Activated CD4-positive, alpha-beta T cell treated with anti-CD3 and anti-CD28 coated beads, Interleukin-2, amount 10 ng/mL, durations not matched to agents 24 days and 14 days (primary cell): ENCODE measurements at regions of chr4 and their contacts with region 1.

Region 1: GRCh38 chr4:55948726-55949474 is at the start of gene CEP135:
- DNase-seq: peak; percentile 98
- H3K4me3 Mint-ChIP-seq: peak within 1 kb of the TSS; percentile 87
- H3K27ac Mint-ChIP-seq: peak within 1 kb of the TSS; percentile 89
- H3K4me1 Mint-ChIP-seq: peaks cover 33% of the 10 kb centered on the region
- H3K27me3 Mint-ChIP-seq: no peaks in the 10 kb centered on the region
- total RNA-seq, gene CEP135: 16.3 and 16.9 TPM in 2 replicates

Region 2: DNA sequence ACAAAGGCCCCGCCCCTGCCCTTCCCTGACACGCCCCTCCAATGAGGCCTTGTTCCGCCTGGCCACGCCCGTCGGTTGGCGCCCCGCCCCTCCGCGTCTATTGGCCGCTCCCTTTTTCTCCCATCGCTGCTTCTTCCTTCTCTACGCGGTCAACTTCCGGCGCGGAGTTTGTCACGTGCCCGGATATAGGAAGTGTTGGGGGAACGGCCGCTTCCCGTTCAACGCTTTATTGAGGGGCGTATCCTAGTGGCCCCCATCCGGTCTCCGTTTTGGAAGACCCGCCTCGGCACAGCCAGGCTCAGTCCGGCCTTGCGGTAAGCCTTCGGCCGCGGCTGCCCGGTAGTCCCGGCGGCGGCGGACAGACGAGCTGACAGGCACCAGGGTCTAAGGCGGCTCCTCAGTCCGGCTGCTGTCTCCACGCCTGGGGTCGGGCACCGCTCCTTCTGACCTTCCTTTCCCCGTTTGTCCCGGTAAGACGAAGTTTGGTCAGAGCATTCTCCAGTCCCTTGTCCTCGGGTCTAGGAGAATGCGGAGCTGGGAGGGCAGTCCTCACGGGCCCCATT is 95.3 kb before region 1 on chr4 and contains the start of gene EXOC1:
- intact Hi-C with region 1: loop called (anchors 1 kb)
- DNase-seq: peak; percentile 99
- H3K4me3 Mint-ChIP-seq: peak within 1 kb of the TSS; percentile 38
- H3K27ac Mint-ChIP-seq: peak within 1 kb of the TSS; percentile 90
- H3K4me1 Mint-ChIP-seq: peaks cover 20% of the 10 kb centered on the region
- H3K27me3 Mint-ChIP-seq: no peaks in the 10 kb centered on the region
- total RNA-seq, gene EXOC1: 20.8 and 21.5 TPM in 2 replicates

Region 3: GRCh38 chr4:55887594-55887993 is 61.3 kb before region 1 on chr4:
- intact Hi-C with region 1: no loop called
- DNase-seq: no peak
- H3K4me3 Mint-ChIP-seq: no peak overlapping the region
- H3K27ac Mint-ChIP-seq: no peak overlapping the region
- H3K4me1 Mint-ChIP-seq: peaks cover 5% of the 10 kb centered on the region
- H3K27me3 Mint-ChIP-seq: no peaks in the 10 kb centered on the region

Region 4: DNA sequence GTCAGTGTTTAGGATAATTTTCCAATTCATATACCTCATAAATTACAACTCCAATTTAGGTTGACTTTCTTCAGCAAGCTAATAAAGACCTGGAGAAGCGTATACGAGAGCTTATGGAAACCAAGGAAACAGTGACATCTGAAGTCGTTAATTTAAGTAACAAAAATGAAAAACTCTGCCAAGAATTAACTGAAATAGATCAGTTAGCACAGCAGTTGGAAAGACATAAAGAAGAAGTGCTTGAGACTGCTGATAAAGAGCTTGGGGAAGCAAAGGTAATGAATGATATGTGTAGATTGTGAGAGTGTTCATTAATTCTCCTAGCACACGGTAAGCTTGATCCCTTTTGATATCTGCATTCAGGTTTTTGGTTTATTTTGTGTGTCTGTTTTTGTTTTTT is 16.7 kb after region 1 on chr4:
- intact Hi-C with region 1: loop called (anchors 2 kb)
- DNase-seq: no peak
- H3K4me3 Mint-ChIP-seq: no peak overlapping the region
- H3K27ac Mint-ChIP-seq: no peak overlapping the region
- H3K4me1 Mint-ChIP-seq: no peaks in the 10 kb centered on the region
- H3K27me3 Mint-ChIP-seq: no peaks in the 10 kb centered on the region

Region 5: GRCh38 chr4:56183344-56183959 is 234.6 kb after region 1 on chr4:
- intact Hi-C with region 1: loop called (anchors 5 kb)
- DNase-seq: no peak
- H3K4me3 Mint-ChIP-seq: no peak overlapping the region
- H3K27ac Mint-ChIP-seq: no peak overlapping the region
- H3K4me1 Mint-ChIP-seq: peaks cover 27% of the 10 kb centered on the region
- H3K27me3 Mint-ChIP-seq: no peaks in the 10 kb centered on the region

Region 6: DNA sequence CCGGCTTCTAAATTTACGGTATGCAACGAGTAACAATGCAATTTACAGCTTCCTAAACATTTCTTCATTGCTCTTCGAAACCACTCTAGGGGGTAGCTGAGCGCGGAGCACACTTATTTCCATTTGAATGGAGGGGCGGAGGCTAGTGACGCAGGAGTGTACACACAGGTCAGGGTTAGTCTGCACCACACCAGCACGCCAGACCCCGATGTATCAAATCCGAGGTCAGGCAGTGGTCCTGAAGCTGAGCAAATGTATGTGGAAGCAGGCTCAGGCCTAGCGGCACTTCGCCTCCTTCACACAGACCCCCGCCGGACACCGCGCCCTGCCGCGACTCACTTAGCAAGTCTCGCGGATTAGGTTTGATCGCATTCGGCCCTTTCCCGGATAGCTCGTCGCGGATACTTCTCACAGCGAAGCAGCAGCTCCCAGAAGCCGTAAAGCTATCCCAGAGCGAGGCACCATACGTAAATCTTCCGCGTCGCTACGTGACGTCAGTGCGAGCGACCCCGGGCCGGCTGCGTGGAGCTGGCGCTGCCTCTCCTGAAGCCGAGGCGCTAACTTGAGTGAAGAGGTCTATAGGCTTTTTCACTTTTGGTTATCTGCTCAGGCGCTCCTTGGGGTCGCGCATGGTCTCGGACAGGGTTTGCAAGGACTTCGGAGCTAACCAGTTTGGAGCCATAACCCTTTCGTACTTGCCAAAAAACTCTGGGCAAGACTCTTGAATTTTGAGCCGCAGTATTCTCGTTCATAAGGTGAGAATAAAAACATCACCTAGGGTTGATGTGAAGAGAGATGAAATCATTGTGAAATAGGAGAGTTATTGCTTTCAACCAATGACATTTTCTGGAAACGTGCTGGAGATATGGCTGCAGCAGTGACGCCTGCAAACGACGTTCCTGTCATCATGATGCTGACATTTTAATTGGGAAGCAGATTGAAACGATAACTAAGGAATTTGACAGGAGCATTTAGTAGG is 438.4 kb after region 1 on chr4 and contains the start of gene AASDH:
- intact Hi-C with region 1: loop called (anchors 1 kb)
- DNase-seq: peak; percentile 99
- H3K4me3 Mint-ChIP-seq: peak within 1 kb of the TSS; percentile 88
- H3K27ac Mint-ChIP-seq: peak within 1 kb of the TSS; percentile 96
- H3K4me1 Mint-ChIP-seq: peaks cover 29% of the 10 kb centered on the region
- H3K27me3 Mint-ChIP-seq: no peaks in the 10 kb centered on the region
- total RNA-seq, gene AASDH: 10.5 and 11.8 TPM in 2 replicates

Region 7: GRCh38 chr4:56821381-56822243 is 872.7 kb after region 1 on chr4 and contains the start of gene SPINK2:
- intact Hi-C with region 1: loop called (anchors 5 kb)
- DNase-seq: peak; percentile 86
- H3K4me3 Mint-ChIP-seq: peak within 1 kb of the TSS; percentile 72
- H3K27ac Mint-ChIP-seq: no peak within 1 kb of the TSS
- H3K4me1 Mint-ChIP-seq: peaks cover 33% of the 10 kb centered on the region
- H3K27me3 Mint-ChIP-seq: peaks cover 36% of the 10 kb centered on the region
- total RNA-seq, gene SPINK2: 0.37 and 0.54 TPM in 2 replicates